Right cardiac atrium (tissue), 5 donors: ENCODE measurements at regions of chr13 and their contacts with region 1.

Region 1: DNA sequence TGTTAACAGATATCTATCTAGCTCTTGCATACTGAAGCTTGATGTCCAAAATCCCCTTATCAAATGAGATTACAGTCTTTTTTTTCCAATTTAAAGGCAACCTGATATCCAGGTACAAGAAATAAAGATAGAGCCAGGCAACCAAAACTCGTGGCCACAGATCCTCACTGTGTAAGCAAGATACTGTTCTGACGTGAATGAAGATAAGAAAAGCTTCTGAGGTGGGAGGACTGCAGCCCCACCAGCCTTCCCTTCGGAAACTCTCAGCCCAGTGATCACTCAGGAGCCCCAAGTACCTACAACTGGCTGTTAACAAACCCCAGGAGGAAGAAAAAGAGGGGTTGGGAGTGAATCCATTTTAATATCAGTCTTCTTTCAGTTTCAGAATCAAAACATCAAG is 191.6 kb downstream of the EFNB2 start:
- DNase-seq: no peak
- ATAC-seq: peak in 1 of 2 donors; percentile 70
- H3K4me3 ChIP-seq: no peak overlapping the region
- H3K27ac ChIP-seq: no peak overlapping the region
- H3K4me1 ChIP-seq: no peaks in the 10 kb centered on the region
- H3K27me3 ChIP-seq: no peaks in the 10 kb centered on the region

Region 2: DNA sequence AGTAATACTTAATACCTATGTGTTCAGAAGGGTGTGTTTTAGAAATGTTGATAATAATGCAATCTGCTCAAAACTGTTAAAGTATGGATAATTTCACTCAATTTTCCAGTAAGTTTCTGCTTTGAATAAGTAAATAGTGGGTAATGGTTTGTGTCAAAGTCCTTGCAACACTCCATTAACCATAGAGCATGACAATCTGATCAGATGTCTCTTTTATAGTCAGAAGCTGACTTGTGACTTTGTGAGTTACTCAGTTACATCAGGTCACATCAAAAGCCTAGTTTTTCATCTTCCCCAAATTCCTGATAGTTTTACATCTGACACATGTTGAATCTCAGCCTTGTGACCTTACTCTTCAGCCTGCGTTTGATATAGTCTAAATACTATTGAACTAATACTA is 146.3 kb before region 1 on chr13:
- intact Hi-C with region 1: no loop called
- DNase-seq: no peak
- ATAC-seq: no peak
- H3K4me3 ChIP-seq: no peak overlapping the region
- H3K27ac ChIP-seq: no peak overlapping the region
- H3K4me1 ChIP-seq: no peaks in the 10 kb centered on the region
- H3K27me3 ChIP-seq: no peaks in the 10 kb centered on the region

Region 3: DNA sequence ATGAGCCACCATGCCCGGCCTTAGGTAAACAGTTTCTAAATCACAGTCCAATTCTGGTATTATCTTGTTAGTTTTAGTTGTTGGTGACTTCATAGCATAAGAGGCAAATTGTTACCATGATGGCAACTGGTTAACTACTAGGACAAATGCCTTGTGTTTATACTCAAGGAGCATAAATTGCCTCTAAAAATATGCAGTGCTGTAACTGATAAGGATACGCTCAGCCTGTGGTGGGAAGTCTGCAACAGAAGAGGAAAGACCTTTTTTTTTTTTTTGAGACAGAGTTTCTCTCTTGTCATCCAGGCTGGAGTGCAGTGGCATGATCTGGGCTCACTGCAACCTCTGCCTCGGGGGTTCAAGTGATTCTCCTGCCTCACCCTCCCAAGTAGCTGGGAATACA is 536.0 kb after region 1 on chr13:
- intact Hi-C with region 1: loop called in 1 of 4 experiments (anchors 5 kb)
- DNase-seq: no peak
- ATAC-seq: no peak
- H3K4me3 ChIP-seq: no peak overlapping the region
- H3K27ac ChIP-seq: no peak overlapping the region
- H3K4me1 ChIP-seq: no peaks in the 10 kb centered on the region
- H3K27me3 ChIP-seq: no peaks in the 10 kb centered on the region